Left ventricle myocardium superior (tissue), 1 donor: ENCODE measurements at regions of chr4 and their contacts with region 1.

Region 1: DNA sequence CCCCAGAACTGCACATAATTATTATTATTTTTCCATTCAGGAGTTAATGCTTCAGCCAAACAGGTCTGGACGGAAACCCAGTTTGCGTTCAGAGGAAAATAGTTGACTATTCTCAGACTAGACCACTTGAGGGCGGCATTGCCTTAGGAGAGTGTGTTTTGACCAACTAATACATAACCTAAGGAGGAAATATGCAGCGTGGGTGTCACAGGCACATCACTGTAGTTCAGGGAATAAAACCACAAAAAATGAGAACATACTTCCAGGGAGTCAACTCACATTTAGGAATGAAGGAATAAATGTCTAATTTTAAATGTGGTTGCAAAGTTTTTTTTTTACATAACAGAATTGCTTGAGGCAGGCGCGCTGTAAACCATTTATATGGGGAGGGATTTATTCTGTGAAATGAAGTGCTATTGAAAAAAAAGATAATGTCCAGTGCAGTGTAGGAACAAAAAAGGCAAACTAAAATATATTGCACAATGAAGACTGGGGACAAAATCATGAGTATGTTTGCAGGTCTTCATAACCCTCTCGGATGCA is 93.3 kb downstream of the SYNPO2 start:
- DNase-seq: no peak
- ATAC-seq: peak; percentile 73

Region 2: GRCh38 chr4:119046263-119046662 is 64.4 kb after region 1 on chr4:
- intact Hi-C with region 1: no loop called
- DNase-seq: peak; percentile 89
- ATAC-seq: peak; percentile 93

Region 3: GRCh38 chr4:119286377-119287002 is 304.6 kb after region 1 on chr4:
- intact Hi-C with region 1: loop called (anchors 5 kb)
- DNase-seq: no peak
- ATAC-seq: peak; percentile 59